ENCODE measurements at regions of chr6 and their contacts with region 1.

Region 1: DNA sequence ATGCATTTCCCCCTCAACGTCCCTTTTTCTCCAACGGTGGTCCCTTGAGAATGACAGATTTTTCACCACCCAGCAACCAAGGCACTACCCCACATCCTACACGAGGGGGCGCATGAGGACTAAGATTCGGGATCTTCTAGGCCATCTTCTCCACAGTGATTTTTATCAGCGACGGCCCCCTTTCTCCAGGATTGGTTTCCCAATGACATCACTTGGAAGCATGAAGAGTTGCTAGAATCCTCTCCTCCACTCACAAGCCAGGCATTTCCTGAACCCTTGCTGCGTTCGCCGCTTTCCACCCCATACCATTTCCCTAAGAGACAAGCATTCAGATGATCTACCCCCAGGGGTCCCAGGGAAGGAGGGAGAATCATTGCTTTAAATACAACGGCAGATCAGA is 252.0 kb downstream of the HIVEP2 start:
- DNase-seq: peak; percentile 85
- H3K4me3 ChIP-seq: peak overlapping the region in 1 of 3 experiments; percentile 2
- H3K27ac ChIP-seq: peak overlapping the region; percentile 85
- H3K4me1 ChIP-seq: peaks cover 13% of the 10 kb centered on the region
- H3K27me3 ChIP-seq: no peaks in the 10 kb centered on the region
- CTCF ChIP-seq: peak; percentile 80 to 88
- POLR2A ChIP-seq: no peak

Region 2: DNA sequence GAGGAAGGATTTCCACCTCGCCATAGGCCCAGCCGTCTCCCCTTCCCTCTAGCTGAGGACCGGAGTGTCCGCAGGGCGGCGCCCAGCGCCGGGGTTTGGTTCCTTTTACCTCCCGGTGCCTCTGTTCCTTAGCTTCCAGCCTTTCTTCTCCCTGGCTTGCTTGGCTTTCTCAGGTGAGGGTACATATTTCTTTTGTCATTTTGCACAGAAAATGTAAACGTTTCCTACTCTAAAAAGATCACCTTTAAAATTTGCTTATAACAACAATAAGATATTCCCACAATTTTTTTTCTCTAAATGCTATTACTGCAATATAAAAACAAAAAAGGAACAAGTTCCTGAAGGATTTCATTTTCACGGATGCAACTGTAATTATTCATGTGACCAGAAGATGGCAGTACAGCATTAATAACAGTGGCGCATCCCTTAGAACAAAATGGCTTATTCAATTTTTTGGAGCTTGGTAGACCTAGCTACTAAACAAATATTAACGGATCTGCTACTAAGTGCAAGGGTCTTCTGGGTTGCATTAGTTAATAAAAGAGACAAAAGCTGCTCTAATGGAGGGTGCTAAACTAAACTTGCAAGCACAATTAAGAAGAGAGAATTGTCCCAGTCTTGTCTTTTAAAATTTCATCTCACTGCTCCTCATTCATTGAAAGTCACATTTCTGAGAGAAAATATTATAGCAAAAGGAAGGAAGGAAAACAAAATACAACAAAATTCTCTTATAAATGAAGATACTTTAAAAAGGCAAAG is 218.2 kb before region 1 on chr6:
- CTCF ChIA-PET with region 1: interaction called, 20 read pairs
- POLR2A ChIA-PET with region 1: no interaction called
- dilution Hi-C with region 1: no loop called
- intact Hi-C with region 1: loop called (anchors 10 kb)
- DNase-seq: peak; percentile 71
- H3K4me3 ChIP-seq: no peak overlapping the region
- H3K27ac ChIP-seq: peak overlapping the region; percentile 1
- H3K4me1 ChIP-seq: peaks cover 2% of the 10 kb centered on the region
- H3K27me3 ChIP-seq: peaks cover 0 to 2% of the 10 kb centered on the region in 2 experiments
- CTCF ChIP-seq: peak; percentile 41 to 43
- POLR2A ChIP-seq: no peak

Region 3: GRCh38 chr6:142746524-142746923 is 53.6 kb after region 1 on chr6:
- CTCF ChIA-PET with region 1: interaction called, 6 read pairs
- POLR2A ChIA-PET with region 1: no interaction called
- dilution Hi-C with region 1: no loop called
- intact Hi-C with region 1: loop called (anchors 1 kb)
- DNase-seq: peak; percentile 55
- H3K4me3 ChIP-seq: no peak overlapping the region
- H3K27ac ChIP-seq: no peak overlapping the region
- H3K4me1 ChIP-seq: no peaks in the 10 kb centered on the region
- H3K27me3 ChIP-seq: no peaks in the 10 kb centered on the region
- CTCF ChIP-seq: peak; percentile 46 to 50
- POLR2A ChIP-seq: no peak

Region 4: GRCh38 chr6:142845624-142846458 is 152.9 kb after region 1 on chr6:
- CTCF ChIA-PET with region 1: interaction called, 3 read pairs
- POLR2A ChIA-PET with region 1: no interaction called
- dilution Hi-C with region 1: no loop called
- intact Hi-C with region 1: loop called (anchors 1 kb)
- DNase-seq: peak; percentile 97
- H3K4me3 ChIP-seq: no peak overlapping the region
- H3K27ac ChIP-seq: peak overlapping the region; percentile 76
- H3K4me1 ChIP-seq: peaks cover 64% of the 10 kb centered on the region
- H3K27me3 ChIP-seq: no peaks in the 10 kb centered on the region
- CTCF ChIP-seq: no peak
- POLR2A ChIP-seq: no peak

Region 5: GRCh38 chr6:142946181-142946923 is 253.4 kb after region 1 on chr6:
- CTCF ChIA-PET with region 1: interaction called, 12 read pairs
- POLR2A ChIA-PET with region 1: no interaction called
- dilution Hi-C with region 1: no loop called
- intact Hi-C with region 1: loop called (anchors 1 kb)
- DNase-seq: peak; percentile 97
- H3K4me3 ChIP-seq: peak overlapping the region; percentile 58 to 91 (median 85)
- H3K27ac ChIP-seq: peak overlapping the region; percentile 85
- H3K4me1 ChIP-seq: peaks cover 17% of the 10 kb centered on the region
- H3K27me3 ChIP-seq: no peaks in the 10 kb centered on the region
- CTCF ChIP-seq: no peak
- POLR2A ChIP-seq: no peak

Region 6: GRCh38 chr6:143279385-143279784 is 586.4 kb after region 1 on chr6:
- CTCF ChIA-PET with region 1: interaction called, 17 read pairs
- POLR2A ChIA-PET with region 1: no interaction called
- dilution Hi-C with region 1: no loop called
- intact Hi-C with region 1: loop called (anchors 1 kb)
- DNase-seq: peak; percentile 24
- H3K4me3 ChIP-seq: no peak overlapping the region
- H3K27ac ChIP-seq: no peak overlapping the region
- H3K4me1 ChIP-seq: no peaks in the 10 kb centered on the region
- H3K27me3 ChIP-seq: no peaks in the 10 kb centered on the region
- CTCF ChIP-seq: peak in 1 of 2 donors; percentile 28
- POLR2A ChIP-seq: no peak

Measured in endothelial cell of umbilical vein (primary cell).